Astrocyte of the cerebellum (primary cell): ENCODE measurements at regions of chr20 and their contacts with region 1.

Region 1: GRCh38 chr20:51595058-51595532 is 52.6 kb upstream of the NFATC2 start:
- DNase-seq: peak; percentile 80
- H3K4me3 ChIP-seq: no peak overlapping the region
- CTCF ChIP-seq: peak; percentile 88

Region 2: DNA sequence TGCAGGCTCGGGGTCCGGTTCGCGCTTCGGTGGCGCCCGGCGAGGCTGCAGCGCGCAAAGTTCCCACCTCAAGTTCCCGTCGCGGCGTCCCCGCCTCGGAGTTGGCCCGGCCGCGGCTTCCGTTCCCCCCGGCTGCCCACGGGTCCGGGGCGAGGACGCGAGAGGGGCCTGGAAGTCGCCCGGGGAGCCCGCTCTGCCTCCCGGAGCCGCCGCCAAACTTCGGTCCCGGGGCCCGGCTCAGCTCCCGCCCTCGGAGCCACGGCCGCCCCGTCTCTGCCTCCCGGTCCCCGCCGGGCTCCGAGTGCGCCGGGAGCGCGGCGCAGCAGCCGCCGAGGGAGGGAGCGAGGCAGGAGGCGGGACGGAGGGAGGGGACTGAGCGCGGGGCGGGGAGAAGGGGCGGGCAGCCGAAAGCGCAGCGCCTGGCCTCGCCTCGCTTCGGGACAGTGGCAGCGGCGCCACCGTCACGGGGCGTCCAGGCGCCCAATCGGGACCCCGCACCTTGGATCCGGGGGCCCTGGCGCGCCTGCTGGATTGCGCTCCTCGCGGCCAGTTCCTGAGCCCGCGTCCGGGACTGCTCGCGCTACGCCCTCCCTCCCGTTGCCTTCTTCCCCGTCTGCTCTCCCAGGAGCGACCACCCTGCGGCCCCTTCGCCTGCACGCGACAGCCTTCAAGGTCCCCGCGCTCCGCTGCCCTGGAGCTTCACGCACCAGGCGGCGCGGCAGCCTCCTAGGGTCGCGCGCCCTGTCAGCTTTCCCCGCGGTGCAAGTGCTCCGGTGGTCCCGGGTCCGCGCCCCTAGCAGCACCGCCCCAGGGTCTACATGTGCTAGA is 572.1 kb before region 1 on chr20 and contains the start of gene KCNG1:
- in situ Hi-C with region 1: loop called (anchors 10 kb)
- DNase-seq: no peak
- H3K4me3 ChIP-seq: peak within 1 kb of the TSS; percentile 68
- CTCF ChIP-seq: no peak

Region 3: DNA sequence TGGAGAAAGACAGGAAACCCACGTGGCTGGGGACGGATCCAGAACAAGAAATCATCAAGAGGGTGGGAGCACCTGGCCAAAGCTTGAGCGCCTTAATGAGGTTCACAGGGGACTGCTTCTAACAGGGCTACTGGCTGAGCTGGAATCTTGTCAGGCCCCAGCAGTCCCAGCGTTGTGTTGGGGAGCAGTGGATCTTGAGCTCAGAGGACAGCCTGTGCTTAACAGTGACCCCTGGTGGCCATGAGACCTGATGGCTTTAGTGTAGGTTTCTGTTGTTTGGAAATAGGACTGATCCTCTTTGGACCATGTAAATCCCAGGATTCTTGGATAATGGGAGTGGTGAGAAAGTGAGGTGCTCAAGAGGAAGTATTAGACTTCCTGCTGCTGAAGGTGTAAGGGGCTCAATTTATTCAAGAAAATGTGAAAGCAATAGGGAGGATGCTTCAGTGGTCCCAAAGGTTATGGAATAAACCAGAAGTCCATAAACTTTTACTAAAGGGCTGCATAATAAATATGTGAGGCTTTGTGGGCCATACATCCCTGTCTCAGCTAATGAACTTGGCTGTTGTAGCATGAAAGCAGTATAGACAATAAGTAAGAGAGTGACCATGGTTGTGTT is 268.8 kb before region 1 on chr20:
- in situ Hi-C with region 1: loop called (anchors 5 kb)
- DNase-seq: no peak
- H3K4me3 ChIP-seq: no peak overlapping the region
- CTCF ChIP-seq: peak; percentile 56

Region 4: DNA sequence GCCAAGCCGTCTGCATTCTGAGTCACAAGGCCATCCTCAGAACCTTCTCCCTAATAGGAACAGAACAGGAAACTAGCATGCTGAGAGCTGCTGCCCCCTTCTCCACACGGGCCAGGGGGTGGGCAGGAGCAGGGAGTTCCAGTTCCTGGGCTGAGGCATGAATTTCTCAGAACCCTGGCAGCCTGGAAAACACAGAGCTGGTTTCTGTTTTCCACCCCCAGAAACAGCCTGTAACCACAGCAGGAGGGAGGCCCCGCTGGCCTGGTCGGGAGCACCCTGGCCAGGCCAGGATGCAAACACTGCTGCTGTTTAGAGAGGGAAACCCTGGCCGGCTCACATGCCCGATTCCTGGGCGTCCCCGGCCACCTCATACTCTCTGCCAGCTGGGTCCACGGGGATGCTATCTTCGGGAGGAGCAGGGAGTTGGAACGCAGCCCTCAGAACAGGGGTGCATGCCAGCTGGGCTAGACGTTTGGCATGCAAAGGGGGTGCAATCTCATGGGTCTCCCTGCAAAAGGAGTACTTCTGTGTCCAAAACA is 182.7 kb before region 1 on chr20:
- in situ Hi-C with region 1: loop called (anchors 10 kb)
- DNase-seq: no peak
- H3K4me3 ChIP-seq: no peak overlapping the region
- CTCF ChIP-seq: no peak

Region 5: GRCh38 chr20:51678026-51678697 is 83.1 kb after region 1 on chr20:
- in situ Hi-C with region 1: no loop called
- DNase-seq: no peak
- H3K4me3 ChIP-seq: no peak overlapping the region
- CTCF ChIP-seq: peak; percentile 47